ENCODE measurements at regions of chrX and their contacts with region 1.

Region 1: DNA sequence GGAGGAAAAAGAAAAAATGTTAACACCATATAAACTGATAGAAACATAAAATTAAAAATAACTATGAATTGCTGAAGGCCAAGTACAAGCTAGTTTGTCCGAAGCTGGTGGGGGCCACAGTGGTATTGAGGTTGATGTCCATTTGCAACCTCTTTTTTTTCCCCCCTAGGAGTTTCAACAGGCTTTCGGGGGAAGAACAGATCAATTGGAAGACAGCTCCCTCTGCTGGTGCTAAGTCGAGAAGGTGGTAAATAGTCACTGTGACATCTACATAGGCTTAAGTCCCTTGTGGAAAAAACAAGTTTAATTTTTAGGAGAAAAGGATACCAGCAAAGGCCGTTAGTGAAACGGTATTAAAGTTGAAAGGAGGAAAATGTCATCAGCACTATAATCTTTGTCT is 115.7 kb upstream of the ZXDA start:
- DNase-seq: peak; percentile 30 to 41 (median 33)
- H3K4me3 ChIP-seq: no peak overlapping the region
- H3K4me3 Mint-ChIP-seq: no peak overlapping the region
- H3K27ac ChIP-seq: no peak overlapping the region
- H3K27ac Mint-ChIP-seq: no peak overlapping the region
- H3K4me1 ChIP-seq: no peaks in the 10 kb centered on the region
- H3K4me1 Mint-ChIP-seq: peaks cover 0 to 6% (median 0%) of the 10 kb centered on the region in 4 donors
- H3K27me3 ChIP-seq: no peaks in the 10 kb centered on the region
- H3K27me3 Mint-ChIP-seq: no peaks in the 10 kb centered on the region

Region 2: GRCh38 chrX:57573754-57574153 is 452.2 kb before region 1 on chrX:
- CTCF ChIA-PET with region 1: no interaction called
- POLR2A ChIA-PET with region 1: no interaction called
- intact Hi-C with region 1: loop called (anchors 2 kb)
- DNase-seq: peak in 2 of 5 donors; percentile 6 to 17
- H3K4me3 ChIP-seq: no peak overlapping the region
- H3K4me3 Mint-ChIP-seq: no peak overlapping the region
- H3K27ac ChIP-seq: no peak overlapping the region
- H3K27ac Mint-ChIP-seq: no peak overlapping the region
- H3K4me1 ChIP-seq: no peaks in the 10 kb centered on the region
- H3K4me1 Mint-ChIP-seq: peaks cover 0 to 4% (median under 1%) of the 10 kb centered on the region in 4 donors
- H3K27me3 ChIP-seq: no peaks in the 10 kb centered on the region
- H3K27me3 Mint-ChIP-seq: no peaks in the 10 kb centered on the region

Region 3: GRCh38 chrX:57772637-57773036 is 253.3 kb before region 1 on chrX:
- CTCF ChIA-PET with region 1: no interaction called
- POLR2A ChIA-PET with region 1: no interaction called
- intact Hi-C with region 1: no loop called
- DNase-seq: no peak
- H3K4me3 ChIP-seq: no peak overlapping the region
- H3K4me3 Mint-ChIP-seq: no peak overlapping the region
- H3K27ac ChIP-seq: no peak overlapping the region
- H3K27ac Mint-ChIP-seq: no peak overlapping the region
- H3K4me1 ChIP-seq: no peaks in the 10 kb centered on the region
- H3K4me1 Mint-ChIP-seq: no peaks in the 10 kb centered on the region
- H3K27me3 ChIP-seq: no peaks in the 10 kb centered on the region
- H3K27me3 Mint-ChIP-seq: no peaks in the 10 kb centered on the region

Region 4: GRCh38 chrX:57821703-57822375 is 204.1 kb before region 1 on chrX:
- CTCF ChIA-PET with region 1: interaction called, 24 read pairs
- POLR2A ChIA-PET with region 1: no interaction called
- intact Hi-C with region 1: loop called (anchors 1 kb)
- DNase-seq: peak; percentile 37 to 56 (median 51)
- H3K4me3 ChIP-seq: no peak overlapping the region
- H3K4me3 Mint-ChIP-seq: peak overlapping the region in 3 of 8 donors; percentile 6 to 63 (median 47)
- H3K27ac ChIP-seq: no peak overlapping the region
- H3K27ac Mint-ChIP-seq: no peak overlapping the region
- H3K4me1 ChIP-seq: peaks cover 2% of the 10 kb centered on the region
- H3K4me1 Mint-ChIP-seq: peaks cover 1 to 5% (median 3%) of the 10 kb centered on the region in 4 donors
- H3K27me3 ChIP-seq: no peaks in the 10 kb centered on the region
- H3K27me3 Mint-ChIP-seq: peaks cover 0 to 1% of the 10 kb centered on the region in 2 donors